ENCODE measurements at regions of chr21 and their contacts with region 1.

Region 1: GRCh38 chr21:33947451-33948095 is 32.0 kb upstream of the ATP5PO start:
- DNase-seq: peak; percentile 86 to 94 (median 89)
- ATAC-seq: peak; percentile 96
- H3K4me3 ChIP-seq: no peak overlapping the region; the same call in 1 of the 2 replicates
- H3K27ac ChIP-seq: peak overlapping the region; percentile 90
- H3K4me1 ChIP-seq: peaks cover 17 to 30% of the 10 kb centered on the region in 2 experiments
- H3K27me3 ChIP-seq: no peaks in the 10 kb centered on the region
- CTCF ChIP-seq: peak in 1 of 3 experiments; percentile 11; a peak in 1 of 6 replicates
- EP300 ChIP-seq: peak; percentile 61; the same call in 1 of the 2 replicates
- POLR2A ChIP-seq: peak; percentile 59; the same call in 1 of the 2 replicates
- RAD21 ChIP-seq: peak in 1 of 2 experiments; percentile 42; a peak in 2 of 4 replicates

Region 2: GRCh38 chr21:33931799-33932390 is 15.7 kb before region 1 on chr21:
- CTCF ChIA-PET with region 1: no interaction called
- POLR2A ChIA-PET with region 1: interaction called, 30 read pairs
- in situ Hi-C with region 1: no loop called
- intact Hi-C with region 1: no loop called
- DNase-seq: peak in 2 of 4 experiments; percentile 43 to 44
- ATAC-seq: peak; percentile 84
- H3K4me3 ChIP-seq: peak overlapping the region; percentile 67
- H3K27ac ChIP-seq: peak overlapping the region; percentile 92
- H3K4me1 ChIP-seq: peaks cover 0 to 6% of the 10 kb centered on the region in 2 experiments; a peak in 1 of 5 replicates
- H3K27me3 ChIP-seq: no peaks in the 10 kb centered on the region
- CTCF ChIP-seq: no peak
- EP300 ChIP-seq: no peak
- POLR2A ChIP-seq: no peak
- RAD21 ChIP-seq: no peak

Region 3: DNA sequence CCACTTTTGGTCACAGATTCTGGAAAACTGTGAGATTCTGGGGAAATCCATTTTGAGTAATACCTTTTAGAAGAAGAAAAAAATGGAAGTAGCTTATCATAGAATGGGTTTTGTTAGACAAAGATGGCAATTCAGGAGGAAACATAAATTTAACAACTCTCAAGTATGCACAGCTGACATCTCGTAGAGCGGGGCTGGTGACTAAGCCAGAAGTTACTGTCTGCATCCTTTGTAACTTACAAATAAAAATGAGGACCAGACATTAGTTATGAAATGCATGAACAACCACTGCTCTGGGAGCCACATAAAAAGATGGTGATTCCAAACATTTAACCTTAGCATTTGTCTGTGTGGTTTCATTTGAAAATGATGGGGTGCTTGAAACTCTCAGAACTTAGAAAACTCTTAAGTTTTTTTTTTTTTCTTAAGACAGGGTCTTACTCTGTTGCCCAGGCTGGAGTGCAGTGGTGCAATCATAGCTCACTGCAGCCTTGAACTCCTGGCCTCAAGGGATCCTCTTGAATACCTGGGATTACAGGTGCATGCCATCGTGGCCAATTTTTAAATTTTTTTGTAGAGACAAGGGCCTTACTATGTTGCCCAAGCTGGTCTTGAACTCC is 17.2 kb after region 1 on chr21:
- CTCF ChIA-PET with region 1: no interaction called
- POLR2A ChIA-PET with region 1: interaction called, 10 read pairs
- in situ Hi-C with region 1: no loop called
- intact Hi-C with region 1: no loop called
- DNase-seq: no peak
- ATAC-seq: no peak
- H3K4me3 ChIP-seq: no peak overlapping the region
- H3K27ac ChIP-seq: no peak overlapping the region
- H3K4me1 ChIP-seq: peaks cover 0 to 28% of the 10 kb centered on the region in 2 experiments; a peak in 3 of 5 replicates
- H3K27me3 ChIP-seq: no peaks in the 10 kb centered on the region
- CTCF ChIP-seq: no peak
- EP300 ChIP-seq: no peak
- POLR2A ChIP-seq: no peak
- RAD21 ChIP-seq: no peak

Measured in K562 (cell line).